Dorsolateral prefrontal cortex (tissue), 120 donors: ENCODE measurements at regions of chr12 and their contacts with region 1.

Region 1: DNA sequence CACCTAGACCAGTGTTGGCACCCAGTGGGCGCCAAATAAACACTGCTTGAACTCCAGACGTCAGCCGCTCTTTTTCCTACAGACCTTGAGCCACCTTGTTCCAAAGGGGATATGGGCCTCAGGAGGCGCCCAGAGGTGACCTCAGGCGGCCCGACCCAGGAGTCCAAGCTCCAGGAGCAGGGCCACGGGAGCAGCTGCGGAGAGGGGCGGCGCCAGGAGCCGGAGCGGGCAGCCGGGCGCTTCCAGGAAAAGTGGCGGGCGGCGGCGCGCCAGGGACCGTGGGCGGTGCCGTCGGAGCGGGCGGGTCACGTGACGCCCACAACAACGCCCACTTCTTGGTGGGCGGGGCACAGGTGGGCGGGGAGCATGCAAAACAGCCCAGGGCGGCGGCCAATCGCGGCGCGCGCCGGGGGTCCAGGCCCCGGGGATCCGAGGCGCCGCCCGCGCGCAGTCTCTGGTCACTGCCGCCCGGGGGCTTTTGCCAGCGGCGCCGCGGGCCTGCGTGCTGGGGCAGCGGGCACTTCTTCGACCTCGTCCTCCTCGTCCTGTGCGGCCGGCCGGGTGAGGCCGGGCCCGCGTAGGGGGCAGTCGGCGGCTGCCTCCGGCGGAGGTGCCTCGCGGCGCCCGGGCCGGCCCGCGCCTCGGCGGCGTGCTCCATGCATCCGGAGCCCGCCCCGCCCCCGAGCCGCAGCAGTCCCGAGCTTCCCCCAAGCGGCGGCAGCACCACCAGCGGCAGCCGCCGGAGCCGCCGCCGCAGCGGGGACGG is at the start of gene ORAI1:
- DNase-seq: peak; percentile 83 to 96 (median 92)
- H3K4me3 ChIP-seq: peak within 1 kb of the TSS; percentile 55 to 89 (median 72)
- H3K27ac ChIP-seq: peak within 1 kb of the TSS; percentile 61 to 96 (median 90)
- H3K27me3 ChIP-seq: no peaks in the 10 kb centered on the region
- CTCF ChIP-seq: peak in 32 of 56 donors; percentile 5 to 57 (median 26)
- total RNA-seq, gene ORAI1: 1.9 to 9.7 (median 4.6) TPM

Region 2: GRCh38 chr12:121351820-121352681 is 274.2 kb before region 1 on chr12 and contains the start of gene ANAPC5:
- intact Hi-C with region 1: loop called in 1 of 2 experiments (anchors 10 kb)
- DNase-seq: peak; percentile 86 to 99 (median 96)
- H3K4me3 ChIP-seq: peak within 1 kb of the TSS; percentile 53 to 99 (median 94)
- H3K27ac ChIP-seq: peak within 1 kb of the TSS in 58 of 59 donors; percentile 3 to 94 (median 84)
- H3K27me3 ChIP-seq: no peaks in the 10 kb centered on the region
- CTCF ChIP-seq: peak in 43 of 56 donors; percentile 19 to 63 (median 33)
- total RNA-seq, gene ANAPC5: 108 to 272 (median 159) TPM

Region 3: GRCh38 chr12:121550974-121551634 is 75.2 kb before region 1 on chr12:
- intact Hi-C with region 1: loop called in 1 of 2 experiments (anchors 5 kb)
- DNase-seq: no peak
- H3K4me3 ChIP-seq: no peak overlapping the region
- H3K27ac ChIP-seq: no peak overlapping the region
- H3K27me3 ChIP-seq: no peaks in the 10 kb centered on the region
- CTCF ChIP-seq: no peak

Region 4: DNA sequence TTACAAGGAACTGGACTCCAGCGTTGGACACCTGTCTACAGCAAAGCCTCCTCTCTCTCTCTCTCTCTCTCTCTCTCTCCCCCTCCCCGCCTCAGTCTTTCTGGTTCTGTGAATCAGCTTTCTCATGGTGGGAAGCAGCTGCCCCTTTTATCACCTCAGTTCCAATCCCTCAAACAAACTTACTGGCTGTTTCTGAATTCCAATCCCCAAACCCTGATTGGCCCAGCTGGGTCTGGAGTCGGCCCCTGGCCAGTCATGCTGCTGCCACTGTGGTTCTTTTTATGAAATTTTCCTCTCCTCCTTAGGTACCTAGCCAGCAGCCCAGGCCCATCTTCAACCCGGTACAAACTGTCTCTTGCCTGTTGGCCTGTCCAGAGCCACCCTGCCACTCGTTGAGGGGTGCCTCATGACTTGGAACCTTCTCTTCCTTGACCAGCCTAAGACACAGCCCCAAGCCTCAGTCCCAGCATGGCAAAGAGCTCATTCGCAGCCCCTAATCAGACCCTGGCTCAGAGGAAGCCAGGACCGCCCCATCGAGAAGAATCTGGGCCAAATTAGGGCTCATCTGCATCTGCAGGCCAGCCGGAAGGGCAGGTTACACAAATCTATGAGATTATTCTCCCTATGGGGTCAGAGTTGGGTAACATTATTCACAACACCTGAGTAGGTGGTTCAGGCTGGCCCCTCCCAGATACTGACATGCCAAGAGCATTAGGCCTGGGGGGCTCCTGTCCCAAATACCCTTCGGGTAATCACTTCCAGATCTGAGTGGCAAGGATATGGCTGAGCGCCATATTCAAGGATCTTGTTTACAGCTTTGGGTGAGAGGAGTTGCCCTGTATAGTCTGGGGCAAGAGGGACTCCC is 52.7 kb after region 1 on chr12:
- intact Hi-C with region 1: loop called in 1 of 2 experiments (anchors 5 kb)
- DNase-seq: no peak
- H3K4me3 ChIP-seq: no peak overlapping the region
- H3K27ac ChIP-seq: peak overlapping the region in 50 of 59 donors; percentile 13 to 85 (median 60)
- H3K27me3 ChIP-seq: no peaks in the 10 kb centered on the region
- CTCF ChIP-seq: no peak

Region 5: DNA sequence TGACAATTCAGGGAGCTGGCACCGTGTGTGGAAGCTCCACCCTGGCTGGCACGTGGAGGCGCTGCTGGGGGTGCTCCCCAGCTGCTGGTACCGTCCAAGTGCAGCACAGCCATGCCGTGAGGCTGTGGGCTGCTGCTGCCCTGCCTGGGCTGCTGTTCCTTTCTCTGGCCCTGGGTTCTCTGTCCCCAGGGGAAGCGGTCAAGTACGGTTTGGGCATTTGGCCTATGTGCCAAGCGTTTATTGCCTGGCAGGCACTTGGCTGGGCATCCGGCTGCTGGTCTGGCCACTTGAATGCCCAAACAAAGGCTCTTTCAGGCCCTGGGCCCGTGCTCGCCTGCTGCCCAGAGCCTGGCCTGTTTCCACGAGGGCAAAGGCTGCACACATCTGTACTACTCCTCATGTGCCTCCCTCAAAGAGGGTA is 127.6 kb after region 1 on chr12:
- intact Hi-C with region 1: loop called in 1 of 2 experiments (anchors 5 kb)
- DNase-seq: peak; percentile 59 to 89 (median 87)
- H3K4me3 ChIP-seq: peak overlapping the region in 1 of 59 donors; percentile 0
- H3K27ac ChIP-seq: peak overlapping the region in 7 of 59 donors; percentile 10 to 67 (median 48)
- H3K27me3 ChIP-seq: no peaks in the 10 kb centered on the region
- CTCF ChIP-seq: peak in 17 of 56 donors; percentile 5 to 47 (median 27)

Region 6: DNA sequence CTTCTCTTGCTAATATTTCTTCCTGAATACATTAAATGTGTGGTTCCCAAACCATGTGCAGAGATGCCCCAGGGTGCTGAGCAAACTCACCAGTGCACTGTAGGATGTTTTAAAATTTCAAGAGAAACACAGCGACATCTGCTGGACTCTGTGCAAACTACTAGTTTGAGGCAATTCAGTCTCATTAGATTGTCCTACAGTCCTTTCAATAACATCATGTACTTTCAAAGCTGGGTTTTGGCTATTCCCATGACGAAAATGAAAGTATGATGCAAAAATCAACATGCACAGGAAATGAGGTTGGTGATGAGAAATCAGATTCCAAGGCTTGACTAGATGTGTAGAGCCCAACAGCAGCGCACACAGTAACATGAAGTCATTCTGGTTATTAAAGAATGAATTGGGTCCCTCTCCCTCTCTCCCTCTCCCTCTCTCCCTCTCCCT is 729.9 kb after region 1 on chr12:
- intact Hi-C with region 1: no loop called
- DNase-seq: peak in 4 of 10 donors; percentile 23 to 75 (median 44)
- H3K4me3 ChIP-seq: no peak overlapping the region
- H3K27ac ChIP-seq: peak overlapping the region in 37 of 59 donors; percentile 11 to 85 (median 61)
- H3K27me3 ChIP-seq: no peaks in the 10 kb centered on the region
- CTCF ChIP-seq: peak; percentile 64 to 90 (median 81)